Activated CD4-positive, alpha-beta T cell treated with anti-CD3 and anti-CD28 coated beads for 36 hours (primary cell): ENCODE measurements at regions of chr4 and their contacts with region 1.

Region 1: GRCh38 chr4:56530269-56531148 is 24.9 kb downstream of the ARL9 start:
- DNase-seq: peak; percentile 92
- ATAC-seq: peak; percentile 99
- H3K4me3 Mint-ChIP-seq: no peak overlapping the region
- H3K27ac Mint-ChIP-seq: peak overlapping the region; percentile 11
- H3K4me1 Mint-ChIP-seq: peaks cover 3% of the 10 kb centered on the region
- H3K27me3 Mint-ChIP-seq: peaks cover 3% of the 10 kb centered on the region

Region 2: DNA sequence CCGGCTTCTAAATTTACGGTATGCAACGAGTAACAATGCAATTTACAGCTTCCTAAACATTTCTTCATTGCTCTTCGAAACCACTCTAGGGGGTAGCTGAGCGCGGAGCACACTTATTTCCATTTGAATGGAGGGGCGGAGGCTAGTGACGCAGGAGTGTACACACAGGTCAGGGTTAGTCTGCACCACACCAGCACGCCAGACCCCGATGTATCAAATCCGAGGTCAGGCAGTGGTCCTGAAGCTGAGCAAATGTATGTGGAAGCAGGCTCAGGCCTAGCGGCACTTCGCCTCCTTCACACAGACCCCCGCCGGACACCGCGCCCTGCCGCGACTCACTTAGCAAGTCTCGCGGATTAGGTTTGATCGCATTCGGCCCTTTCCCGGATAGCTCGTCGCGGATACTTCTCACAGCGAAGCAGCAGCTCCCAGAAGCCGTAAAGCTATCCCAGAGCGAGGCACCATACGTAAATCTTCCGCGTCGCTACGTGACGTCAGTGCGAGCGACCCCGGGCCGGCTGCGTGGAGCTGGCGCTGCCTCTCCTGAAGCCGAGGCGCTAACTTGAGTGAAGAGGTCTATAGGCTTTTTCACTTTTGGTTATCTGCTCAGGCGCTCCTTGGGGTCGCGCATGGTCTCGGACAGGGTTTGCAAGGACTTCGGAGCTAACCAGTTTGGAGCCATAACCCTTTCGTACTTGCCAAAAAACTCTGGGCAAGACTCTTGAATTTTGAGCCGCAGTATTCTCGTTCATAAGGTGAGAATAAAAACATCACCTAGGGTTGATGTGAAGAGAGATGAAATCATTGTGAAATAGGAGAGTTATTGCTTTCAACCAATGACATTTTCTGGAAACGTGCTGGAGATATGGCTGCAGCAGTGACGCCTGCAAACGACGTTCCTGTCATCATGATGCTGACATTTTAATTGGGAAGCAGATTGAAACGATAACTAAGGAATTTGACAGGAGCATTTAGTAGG is 143.2 kb before region 1 on chr4 and contains the start of gene AASDH:
- CTCF ChIA-PET with region 1: no interaction called
- POLR2A ChIA-PET with region 1: no interaction called
- intact Hi-C with region 1: loop called in 1 of 2 experiments (anchors 1 kb)
- DNase-seq: peak; percentile 97
- ATAC-seq: peak; percentile 94
- H3K4me3 Mint-ChIP-seq: peak within 1 kb of the TSS; percentile 98
- H3K27ac Mint-ChIP-seq: peak within 1 kb of the TSS; percentile 100
- H3K4me1 Mint-ChIP-seq: peaks cover 31% of the 10 kb centered on the region
- H3K27me3 Mint-ChIP-seq: no peaks in the 10 kb centered on the region
- total RNA-seq, gene AASDH: 13.3 to 16.4 TPM

Region 3: GRCh38 chr4:56821381-56822243 is 291.1 kb after region 1 on chr4 and contains the start of gene SPINK2:
- CTCF ChIA-PET with region 1: no interaction called
- POLR2A ChIA-PET with region 1: no interaction called
- intact Hi-C with region 1: loop called in 1 of 2 experiments (anchors 1 kb)
- DNase-seq: peak; percentile 83
- ATAC-seq: peak; percentile 79
- H3K4me3 Mint-ChIP-seq: peak within 1 kb of the TSS; percentile 69
- H3K27ac Mint-ChIP-seq: no peak within 1 kb of the TSS
- H3K4me1 Mint-ChIP-seq: peaks cover 34% of the 10 kb centered on the region
- H3K27me3 Mint-ChIP-seq: peaks cover 11% of the 10 kb centered on the region
- total RNA-seq, gene SPINK2: 1.3 to 1.9 TPM